Left cardiac atrium (tissue), 4 donors: ENCODE measurements at regions of chr7 and their contacts with region 1.

Region 1: GRCh38 chr7:5357976-5358569 is 65.6 kb downstream of the TNRC18 start:
- DNase-seq: no peak
- ATAC-seq: no peak

Region 2: GRCh38 chr7:4042402-4043045 is 1315.5 kb before region 1 on chr7:
- intact Hi-C with region 1: no loop called
- DNase-seq: no peak
- ATAC-seq: no peak

Region 3: GRCh38 chr7:5243261-5243660 is 114.8 kb before region 1 on chr7:
- intact Hi-C with region 1: loop called in 1 of 2 experiments (anchors 2 kb)
- DNase-seq: no peak
- ATAC-seq: no peak

Region 4: GRCh38 chr7:5423844-5424688 is 66.0 kb after region 1 on chr7:
- intact Hi-C with region 1: no loop called
- DNase-seq: peak; percentile 94
- ATAC-seq: peak; percentile 26 to 28

Region 5: DNA sequence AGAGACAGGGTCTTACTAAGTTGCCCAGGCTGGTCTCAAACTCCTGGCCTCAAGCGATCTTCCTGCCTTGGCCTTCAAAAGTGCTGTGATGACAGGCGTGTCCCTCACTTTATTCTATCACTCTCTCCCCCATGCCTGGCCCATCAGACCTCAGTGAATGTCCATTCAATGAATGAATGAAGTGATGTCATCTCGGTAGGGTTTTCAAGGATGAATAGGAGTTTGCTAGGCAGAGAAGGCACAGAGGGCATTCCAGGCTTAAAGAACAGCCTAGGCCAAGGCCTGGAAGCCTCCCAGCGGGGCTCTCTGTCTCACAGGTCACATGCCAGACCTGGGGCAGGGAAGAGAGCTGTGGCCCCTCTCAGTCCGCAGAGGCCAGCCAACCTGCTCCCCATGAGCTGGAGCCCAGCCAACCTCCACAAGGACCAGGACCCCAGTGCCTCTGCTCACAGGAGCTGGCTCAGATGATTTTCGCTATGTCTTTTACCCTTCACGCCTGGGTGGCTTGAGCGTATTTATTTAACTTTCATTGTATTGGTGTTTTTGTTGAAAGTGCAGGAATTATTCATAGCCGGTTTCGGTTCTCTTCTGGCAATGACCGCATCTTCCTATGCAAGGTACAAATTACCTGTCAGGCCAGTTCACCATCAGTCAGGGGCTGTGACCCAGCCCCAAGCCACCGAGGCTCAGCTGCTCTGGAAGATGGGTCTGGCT is 77.4 kb after region 1 on chr7:
- intact Hi-C with region 1: no loop called
- DNase-seq: no peak
- ATAC-seq: no peak